Adrenal gland (tissue), 19 donors: ENCODE measurements at regions of chr9 and their contacts with region 1.

Region 1: GRCh38 chr9:38747067-38747466 is 27.1 kb upstream of the FAM240B start:
- DNase-seq: no peak
- H3K4me3 ChIP-seq: no peak overlapping the region
- H3K27ac ChIP-seq: no peak overlapping the region
- H3K4me1 ChIP-seq: no peaks in the 10 kb centered on the region
- H3K27me3 ChIP-seq: no peaks in the 10 kb centered on the region
- CTCF ChIP-seq: no peak
- POLR2A ChIP-seq: no peak

Region 2: DNA sequence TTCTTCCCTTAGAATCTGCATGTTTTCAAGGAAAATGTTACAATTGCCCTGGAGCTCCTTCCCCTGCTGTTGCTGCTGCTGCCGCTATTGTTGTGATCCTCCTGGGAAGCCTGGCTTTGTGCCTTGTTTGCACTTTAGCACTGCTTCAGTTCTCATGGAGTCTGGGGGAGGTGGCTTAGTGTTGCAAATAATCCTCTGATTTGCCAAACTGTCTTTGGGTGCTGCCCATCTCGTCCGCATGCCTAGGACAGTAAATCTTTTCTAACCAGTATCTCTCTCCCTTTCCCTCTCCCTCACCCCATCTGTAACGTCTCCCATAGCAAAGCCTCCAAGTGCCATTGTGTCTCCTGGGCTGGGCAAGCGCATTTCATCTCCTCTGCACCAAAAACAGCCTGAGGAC is 57.4 kb before region 1 on chr9:
- intact Hi-C with region 1: loop called in 1 of 2 experiments (anchors 10 kb)
- DNase-seq: no peak
- H3K4me3 ChIP-seq: no peak overlapping the region
- H3K27ac ChIP-seq: no peak overlapping the region
- H3K4me1 ChIP-seq: peaks cover 0 to 4% of the 10 kb centered on the region in 2 donors
- H3K27me3 ChIP-seq: no peaks in the 10 kb centered on the region
- CTCF ChIP-seq: no peak
- POLR2A ChIP-seq: no peak